Spleen (tissue), 13 donors: ENCODE measurements at regions of chr16 and their contacts with region 1.

Region 1: GRCh38 chr16:11534262-11534661 is 52.5 kb downstream of the LITAF start:
- DNase-seq: no peak
- H3K4me3 ChIP-seq: no peak overlapping the region
- H3K27ac ChIP-seq: no peak overlapping the region
- H3K4me1 ChIP-seq: peaks cover 0 to 40% (median 1%) of the 10 kb centered on the region in 6 donors
- H3K27me3 ChIP-seq: no peaks in the 10 kb centered on the region
- CTCF ChIP-seq: no peak
- POLR2A ChIP-seq: no peak

Region 2: DNA sequence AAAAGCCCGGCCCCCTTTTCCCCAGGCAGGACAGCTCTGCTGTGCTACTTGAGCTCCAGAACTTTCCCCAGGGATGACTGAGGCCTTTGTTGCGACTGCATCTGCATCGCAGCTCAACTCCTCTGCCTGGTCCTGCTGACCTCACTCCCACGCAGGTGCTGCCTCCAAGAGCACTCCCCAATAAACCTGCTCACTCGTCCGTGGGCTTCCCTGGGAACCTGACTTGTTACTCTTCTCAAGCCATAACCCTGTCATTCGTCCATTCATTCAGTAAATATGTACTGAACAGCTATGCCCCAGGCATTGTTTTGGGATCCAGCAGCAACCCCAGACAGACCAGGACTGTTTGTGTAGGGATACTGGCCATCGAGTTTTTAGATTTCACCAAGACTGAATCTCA is 200.6 kb before region 1 on chr16:
- intact Hi-C with region 1: no loop called
- DNase-seq: no peak
- H3K4me3 ChIP-seq: no peak overlapping the region
- H3K27ac ChIP-seq: no peak overlapping the region
- H3K4me1 ChIP-seq: peaks cover 11 to 13% (median 12%) of the 10 kb centered on the region in 6 donors
- H3K27me3 ChIP-seq: no peaks in the 10 kb centered on the region
- CTCF ChIP-seq: no peak
- POLR2A ChIP-seq: no peak

Region 3: GRCh38 chr16:11639925-11640899 is 106.0 kb after region 1 on chr16:
- intact Hi-C with region 1: loop called (anchors 2 kb)
- DNase-seq: peak; percentile 85
- H3K4me3 ChIP-seq: peak overlapping the region in 1 of 8 donors; percentile 58
- H3K27ac ChIP-seq: peak overlapping the region in 7 of 8 donors; percentile 82 to 96 (median 88)
- H3K4me1 ChIP-seq: peaks cover 4 to 43% (median 18%) of the 10 kb centered on the region in 6 donors
- H3K27me3 ChIP-seq: peaks cover 0 to 7% (median 0%) of the 10 kb centered on the region in 7 donors
- CTCF ChIP-seq: peak in 1 of 11 experiments; percentile 16
- POLR2A ChIP-seq: peak in 1 of 3 donors; percentile 22

Region 4: DNA sequence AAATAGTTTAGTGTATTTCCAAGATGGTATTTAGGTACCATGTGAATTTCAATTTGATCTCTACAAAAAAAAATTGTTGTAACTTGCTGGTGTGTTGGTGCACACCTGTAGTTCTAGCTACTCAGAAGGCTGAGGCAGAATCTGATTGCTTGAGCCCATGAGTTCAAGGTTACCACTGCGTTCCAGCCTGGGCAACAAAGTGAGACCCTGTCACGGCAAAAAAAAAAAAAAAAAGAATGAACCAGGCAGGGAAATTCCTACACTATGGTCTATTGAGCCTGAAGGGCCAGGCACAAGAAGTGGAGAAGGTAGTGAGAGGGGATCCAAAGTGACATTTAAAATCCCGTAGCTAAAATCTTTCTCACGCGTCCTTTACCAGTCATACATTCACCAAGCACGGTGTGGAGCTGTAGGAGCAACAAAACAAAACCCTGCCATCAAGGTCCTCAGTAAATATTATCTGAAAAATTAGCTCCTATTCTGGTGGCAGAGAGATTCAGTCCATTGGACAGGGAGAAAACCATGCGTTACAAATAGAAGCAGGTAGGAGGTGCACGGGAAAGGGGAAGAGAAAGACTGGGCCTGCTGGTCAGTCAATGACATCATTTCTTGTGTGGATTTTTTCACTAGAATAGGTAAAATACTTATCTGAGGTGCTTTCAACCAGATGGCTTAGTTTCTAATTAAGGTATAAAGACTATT is 181.1 kb after region 1 on chr16:
- intact Hi-C with region 1: loop called (anchors 5 kb)
- DNase-seq: no peak
- H3K4me3 ChIP-seq: no peak overlapping the region
- H3K27ac ChIP-seq: peak overlapping the region in 2 of 8 donors; percentile 1 to 31
- H3K4me1 ChIP-seq: peaks cover 0 to 57% (median 12%) of the 10 kb centered on the region in 6 donors
- H3K27me3 ChIP-seq: no peaks in the 10 kb centered on the region
- CTCF ChIP-seq: no peak
- POLR2A ChIP-seq: no peak

Region 5: DNA sequence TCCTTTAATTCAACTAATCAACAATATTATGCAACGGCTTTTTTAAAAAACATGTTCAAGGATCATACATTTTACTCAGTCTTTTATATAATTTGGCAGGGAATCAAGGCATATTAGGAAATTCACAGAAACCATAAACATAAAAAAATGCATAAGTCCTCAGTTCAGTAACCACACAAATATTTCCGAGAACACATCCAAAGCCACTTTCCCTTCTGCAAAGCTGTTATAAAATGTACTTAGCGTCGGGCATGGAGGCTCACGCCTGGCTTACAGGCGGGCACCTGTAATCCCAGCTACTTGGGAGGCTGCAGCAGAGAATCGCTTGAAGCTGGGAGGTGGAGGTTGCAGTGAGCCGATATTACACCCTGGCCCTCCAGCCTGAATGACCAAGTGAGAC is 272.5 kb after region 1 on chr16:
- intact Hi-C with region 1: loop called (anchors 5 kb)
- DNase-seq: no peak
- H3K4me3 ChIP-seq: no peak overlapping the region
- H3K27ac ChIP-seq: no peak overlapping the region
- H3K4me1 ChIP-seq: peaks cover 0 to 17% (median 0%) of the 10 kb centered on the region in 6 donors
- H3K27me3 ChIP-seq: no peaks in the 10 kb centered on the region
- CTCF ChIP-seq: no peak
- POLR2A ChIP-seq: no peak